ENCODE measurements at regions of chr19 and their contacts with region 1.

Region 1: GRCh38 chr19:40305403-40305802 is 20.3 kb upstream of the AKT2 start:
- DNase-seq: peak; percentile 96 to 99
- ATAC-seq: peak; percentile 94 to 96
- H3K4me3 ChIP-seq: no peak overlapping the region
- H3K27ac ChIP-seq: no peak overlapping the region
- H3K4me1 ChIP-seq: no peaks in the 10 kb centered on the region
- CTCF ChIP-seq: peak; percentile 100
- EP300 ChIP-seq: no peak
- POLR2A ChIP-seq: no peak
- RAD21 ChIP-seq: peak; percentile 95 to 98

Region 2: DNA sequence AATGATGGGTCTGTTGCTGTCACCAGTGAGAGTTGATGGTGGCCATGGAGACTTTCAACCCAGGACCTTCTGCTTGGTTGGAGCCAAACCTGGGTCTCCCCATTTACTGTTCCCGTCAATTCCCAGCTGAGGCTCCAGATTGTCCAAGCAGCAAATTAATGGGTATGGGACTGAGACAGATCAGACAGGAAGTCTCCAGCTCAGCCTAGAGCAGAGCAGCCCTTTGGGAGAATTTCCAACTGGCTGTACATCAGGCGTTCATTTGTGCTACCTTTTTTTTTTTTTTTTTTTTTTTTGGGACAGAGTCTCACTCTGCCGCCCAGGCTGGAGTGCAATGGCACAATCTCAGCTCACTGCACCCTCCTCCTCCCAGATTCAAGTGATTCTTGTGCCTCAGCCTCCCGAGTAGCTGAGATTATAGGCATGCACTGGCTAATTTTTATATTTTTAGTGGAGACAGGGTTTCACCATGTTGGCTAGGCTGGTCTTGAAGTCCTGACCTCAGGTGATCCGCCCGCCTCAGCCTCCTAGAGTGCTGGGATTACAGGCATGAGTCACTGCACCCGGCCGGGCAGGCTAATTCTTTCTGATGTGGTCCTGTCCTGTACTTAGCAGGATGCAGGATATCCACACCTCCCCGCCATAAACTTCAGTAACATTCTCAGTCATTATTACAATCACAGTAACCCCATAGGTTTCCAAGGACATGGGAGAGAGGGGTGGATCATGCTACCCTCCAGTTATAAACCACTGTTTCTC is 104.9 kb before region 1 on chr19:
- CTCF ChIA-PET with region 1: no interaction called
- POLR2A ChIA-PET with region 1: no interaction called
- DNase-seq: no peak
- ATAC-seq: peak in 1 of 2 experiments; percentile 34; a peak in 2 of 6 replicates
- H3K4me3 ChIP-seq: no peak overlapping the region
- H3K27ac ChIP-seq: no peak overlapping the region
- H3K4me1 ChIP-seq: no peaks in the 10 kb centered on the region
- CTCF ChIP-seq: no peak
- EP300 ChIP-seq: no peak
- POLR2A ChIP-seq: no peak
- RAD21 ChIP-seq: no peak

Region 3: DNA sequence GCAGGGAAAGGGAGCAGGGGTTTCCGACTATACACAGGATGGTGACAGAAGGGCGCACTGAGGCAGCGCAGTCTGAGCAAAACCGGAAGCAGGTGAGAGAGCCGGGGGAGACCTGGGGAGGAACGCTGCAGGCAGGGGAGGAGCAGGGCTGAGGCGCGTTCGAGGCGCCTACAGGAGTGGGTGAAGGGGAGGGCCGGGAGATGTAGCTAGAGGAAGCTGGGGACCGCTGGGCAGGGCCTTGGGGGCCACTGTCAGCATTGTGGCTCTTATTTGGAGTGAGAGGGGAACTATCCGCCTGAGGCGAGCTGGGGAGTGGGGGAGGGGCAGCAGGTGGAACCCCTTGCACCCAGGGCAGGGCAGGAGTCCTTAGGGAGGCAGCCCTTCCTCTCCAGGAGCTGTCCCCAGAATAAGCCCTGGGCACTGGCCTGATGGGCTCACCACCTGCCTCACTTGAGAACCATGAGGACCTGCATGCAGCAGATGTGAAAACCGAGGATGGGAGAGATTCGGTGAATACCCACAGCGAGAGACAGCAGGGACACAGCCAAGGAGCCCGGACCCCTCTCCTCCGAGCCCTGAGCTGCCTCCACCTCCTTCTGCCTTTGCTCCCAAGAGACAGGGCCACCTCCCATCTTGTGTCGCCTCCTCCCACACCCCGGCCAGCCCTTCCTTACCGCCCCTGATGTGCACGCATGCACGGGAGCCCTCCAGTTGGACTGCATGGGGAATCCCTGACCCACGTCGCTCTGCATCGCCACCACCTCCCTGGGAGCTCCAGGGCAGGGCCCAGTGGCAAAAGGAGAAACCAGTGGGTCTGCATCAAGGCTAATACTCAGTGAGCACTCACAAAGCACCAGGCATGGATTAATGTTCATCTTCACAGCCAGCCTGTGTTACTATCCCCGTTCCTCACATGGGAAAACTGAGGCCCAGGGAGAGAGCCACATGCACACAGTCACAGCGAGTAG is 30.5 kb before region 1 on chr19:
- CTCF ChIA-PET with region 1: interaction called, 61 read pairs
- POLR2A ChIA-PET with region 1: no interaction called
- DNase-seq: no peak
- ATAC-seq: no peak
- H3K4me3 ChIP-seq: no peak overlapping the region
- H3K27ac ChIP-seq: no peak overlapping the region
- H3K4me1 ChIP-seq: no peaks in the 10 kb centered on the region
- CTCF ChIP-seq: no peak
- EP300 ChIP-seq: no peak
- POLR2A ChIP-seq: no peak
- RAD21 ChIP-seq: no peak

Region 4: GRCh38 chr19:40322871-40323615 is 17.6 kb after region 1 on chr19:
- CTCF ChIA-PET with region 1: interaction called, 142 read pairs
- POLR2A ChIA-PET with region 1: interaction called, 3 read pairs
- DNase-seq: no peak
- ATAC-seq: no peak; a peak in 2 of 6 replicates
- H3K4me3 ChIP-seq: no peak overlapping the region
- H3K27ac ChIP-seq: no peak overlapping the region
- H3K4me1 ChIP-seq: no peaks in the 10 kb centered on the region
- CTCF ChIP-seq: no peak
- EP300 ChIP-seq: no peak
- POLR2A ChIP-seq: no peak
- RAD21 ChIP-seq: no peak

Region 5: DNA sequence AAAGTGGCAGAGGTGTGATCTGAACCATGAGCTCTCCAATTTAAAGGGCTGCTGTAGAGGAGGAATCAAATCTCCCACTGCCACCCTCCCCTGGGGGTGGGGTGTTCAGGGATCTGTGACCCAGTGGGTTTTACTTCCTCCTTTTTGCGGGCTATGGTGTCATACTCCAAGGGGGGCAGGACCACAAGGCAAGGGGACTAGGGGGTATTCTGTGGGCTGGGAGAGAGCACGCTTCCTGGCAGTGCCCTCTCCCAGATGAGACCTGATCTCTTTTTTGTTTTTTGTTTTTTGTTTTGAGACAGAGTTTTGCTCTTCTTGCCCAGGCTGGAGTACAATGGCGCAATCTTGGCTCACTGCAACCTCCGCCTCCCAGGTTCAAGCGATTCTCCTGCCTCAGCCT is 53.4 kb after region 1 on chr19:
- CTCF ChIA-PET with region 1: interaction called, 36 read pairs
- POLR2A ChIA-PET with region 1: no interaction called
- DNase-seq: no peak
- ATAC-seq: no peak
- H3K4me3 ChIP-seq: no peak overlapping the region
- H3K27ac ChIP-seq: no peak overlapping the region
- H3K4me1 ChIP-seq: no peaks in the 10 kb centered on the region
- CTCF ChIP-seq: no peak
- EP300 ChIP-seq: no peak
- POLR2A ChIP-seq: no peak
- RAD21 ChIP-seq: no peak

Region 6: DNA sequence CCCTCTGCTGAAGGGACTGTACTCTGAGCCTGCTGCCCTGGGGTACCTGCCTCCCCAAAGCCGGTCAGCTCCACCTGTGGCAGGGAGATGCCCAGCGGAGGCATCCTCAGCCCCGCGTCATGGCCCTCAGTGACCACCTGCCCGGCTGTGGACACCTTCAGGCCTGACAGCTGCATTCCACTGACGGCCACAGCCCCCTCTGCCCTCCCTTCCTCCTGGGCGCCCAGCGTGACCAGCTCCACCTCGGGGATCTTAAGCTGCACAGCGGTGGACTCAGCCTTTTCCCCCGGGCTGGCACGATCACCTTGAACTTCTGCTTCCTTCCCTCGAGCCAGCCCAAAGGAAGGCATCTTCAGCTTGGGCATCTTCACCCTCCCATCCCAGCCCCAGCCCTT is 89.4 kb after region 1 on chr19:
- CTCF ChIA-PET with region 1: interaction called, 18 read pairs
- POLR2A ChIA-PET with region 1: no interaction called
- DNase-seq: no peak
- ATAC-seq: no peak
- H3K4me3 ChIP-seq: no peak overlapping the region
- H3K27ac ChIP-seq: no peak overlapping the region
- H3K4me1 ChIP-seq: no peaks in the 10 kb centered on the region
- CTCF ChIP-seq: no peak
- EP300 ChIP-seq: no peak
- POLR2A ChIP-seq: no peak
- RAD21 ChIP-seq: no peak

Region 7: GRCh38 chr19:40425450-40426287 is 120.3 kb after region 1 on chr19 and contains the start of gene SERTAD1:
- CTCF ChIA-PET with region 1: interaction called, 32 read pairs
- POLR2A ChIA-PET with region 1: interaction called, 11 read pairs
- DNase-seq: peak; percentile 100
- ATAC-seq: peak; percentile 78 to 85
- H3K4me3 ChIP-seq: peak within 1 kb of the TSS; percentile 66
- H3K27ac ChIP-seq: peak within 1 kb of the TSS; percentile 93 to 94
- H3K4me1 ChIP-seq: peaks cover 25% of the 10 kb centered on the region
- CTCF ChIP-seq: peak; percentile 100
- EP300 ChIP-seq: no peak; a peak in 1 of 5 replicates
- POLR2A ChIP-seq: peak; percentile 99
- RAD21 ChIP-seq: peak; percentile 11 to 73; a peak in 4 of 5 replicates
- polyA plus RNA-seq, gene SERTAD1: 10.0 and 10.7 TPM in 2 replicates

Region 8: GRCh38 chr19:40529093-40529954 is 223.9 kb after region 1 on chr19:
- CTCF ChIA-PET with region 1: interaction called, 13 read pairs
- POLR2A ChIA-PET with region 1: no interaction called
- DNase-seq: peak; percentile 94 to 100
- ATAC-seq: peak; percentile 37 to 78
- H3K4me3 ChIP-seq: peak overlapping the region; percentile 50
- H3K27ac ChIP-seq: peak overlapping the region; percentile 55 to 79
- H3K4me1 ChIP-seq: peaks cover 18% of the 10 kb centered on the region
- CTCF ChIP-seq: peak; percentile 99
- EP300 ChIP-seq: 0 out of 5 replicates have a peak, but pooled peaks of 1 of the 2 experiments have one; percentile 17
- POLR2A ChIP-seq: no peak
- RAD21 ChIP-seq: peak; percentile 43 to 72; a peak in 4 of 5 replicates

Measured in A549 (cell line).